ENCODE measurements at regions of chr2 and their contacts with region 1.

Region 1: DNA sequence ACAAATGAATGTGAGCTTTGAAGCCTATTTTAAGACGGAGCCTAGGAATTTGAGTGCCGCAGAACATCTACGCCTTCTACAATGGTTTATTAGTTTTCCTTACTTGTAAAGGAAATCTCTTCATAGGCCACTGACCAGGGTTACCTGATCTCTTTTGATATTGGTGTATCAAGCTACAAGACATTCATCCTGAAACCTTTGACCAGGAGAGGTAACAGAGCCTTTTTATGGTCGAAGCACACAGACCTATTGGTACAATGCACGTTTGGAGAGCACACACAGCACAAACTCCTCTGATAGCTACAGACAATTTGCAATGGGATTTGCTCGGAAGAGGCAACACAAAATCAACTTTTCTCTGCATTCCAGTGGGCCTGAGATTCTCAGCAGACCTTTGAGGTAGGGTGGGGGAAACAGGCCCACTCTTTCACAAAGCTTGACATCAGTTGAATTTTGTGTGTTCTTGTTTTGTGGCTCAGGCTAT is 12.8 kb downstream of the MYCN start:
- DNase-seq: no peak
- H3K4me3 ChIP-seq: no peak overlapping the region
- H3K27ac ChIP-seq: no peak overlapping the region
- H3K27me3 ChIP-seq: no peaks in the 10 kb centered on the region
- CTCF ChIP-seq: no peak

Region 2: DNA sequence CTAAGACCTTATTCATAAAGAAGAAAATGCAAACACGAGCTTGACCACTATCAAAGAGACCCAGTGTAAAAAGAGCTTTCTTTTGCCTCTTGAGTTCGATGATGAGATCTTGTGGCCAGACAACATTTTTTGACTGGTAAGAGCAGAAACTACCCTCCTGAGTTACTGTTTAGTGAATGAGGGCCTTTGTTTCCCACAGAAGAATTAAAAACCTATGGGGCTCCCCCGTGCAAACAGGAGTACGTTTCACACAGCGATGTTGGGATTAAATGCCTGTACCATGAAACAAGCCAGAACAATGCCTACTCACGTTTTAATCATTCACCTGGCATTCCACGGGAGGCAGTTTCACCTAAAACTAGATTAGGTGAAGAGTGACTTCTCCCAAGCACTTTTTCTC is 23.2 kb after region 1 on chr2:
- intact Hi-C with region 1: loop called in 1 of 2 experiments (anchors 2 kb)
- DNase-seq: no peak
- H3K4me3 ChIP-seq: no peak overlapping the region
- H3K27ac ChIP-seq: no peak overlapping the region
- H3K27me3 ChIP-seq: no peaks in the 10 kb centered on the region
- CTCF ChIP-seq: no peak

Measured in dorsolateral prefrontal cortex (tissue), 120 donors.